ENCODE measurements at regions of chr5 and their contacts with region 1.

Region 1: GRCh38 chr5:149128023-149128875 is 13.0 kb upstream of the ABLIM3 start:
- DNase-seq: peak; percentile 87
- ATAC-seq: peak; percentile 48
- H3K4me3 ChIP-seq: no peak overlapping the region
- H3K27ac ChIP-seq: peak overlapping the region; percentile 19
- H3K4me1 ChIP-seq: peaks cover 71% of the 10 kb centered on the region
- H3K27me3 ChIP-seq: no peaks in the 10 kb centered on the region
- CTCF ChIP-seq: peak; percentile 100

Region 2: GRCh38 chr5:148760945-148761638 is 367.2 kb before region 1 on chr5:
- CTCF ChIA-PET with region 1: no interaction called
- POLR2A ChIA-PET with region 1: interaction called, 16 read pairs
- intact Hi-C with region 1: no loop called
- DNase-seq: no peak
- ATAC-seq: no peak
- H3K4me3 ChIP-seq: no peak overlapping the region
- H3K27ac ChIP-seq: no peak overlapping the region
- H3K4me1 ChIP-seq: peaks cover under 1% of the 10 kb centered on the region; the same call in 1 of the 2 replicates
- H3K27me3 ChIP-seq: no peaks in the 10 kb centered on the region
- CTCF ChIP-seq: no peak

Region 3: GRCh38 chr5:148912714-148913398 is 215.4 kb before region 1 on chr5:
- CTCF ChIA-PET with region 1: no interaction called
- POLR2A ChIA-PET with region 1: no interaction called
- intact Hi-C with region 1: loop called (anchors 5 kb)
- DNase-seq: peak; percentile 100
- ATAC-seq: peak; percentile 62
- H3K4me3 ChIP-seq: peak overlapping the region; percentile 19; the same call in 1 of the 2 replicates
- H3K27ac ChIP-seq: peak overlapping the region; percentile 88
- H3K4me1 ChIP-seq: peaks cover 80% of the 10 kb centered on the region
- H3K27me3 ChIP-seq: no peaks in the 10 kb centered on the region
- CTCF ChIP-seq: peak; percentile 97

Region 4: DNA sequence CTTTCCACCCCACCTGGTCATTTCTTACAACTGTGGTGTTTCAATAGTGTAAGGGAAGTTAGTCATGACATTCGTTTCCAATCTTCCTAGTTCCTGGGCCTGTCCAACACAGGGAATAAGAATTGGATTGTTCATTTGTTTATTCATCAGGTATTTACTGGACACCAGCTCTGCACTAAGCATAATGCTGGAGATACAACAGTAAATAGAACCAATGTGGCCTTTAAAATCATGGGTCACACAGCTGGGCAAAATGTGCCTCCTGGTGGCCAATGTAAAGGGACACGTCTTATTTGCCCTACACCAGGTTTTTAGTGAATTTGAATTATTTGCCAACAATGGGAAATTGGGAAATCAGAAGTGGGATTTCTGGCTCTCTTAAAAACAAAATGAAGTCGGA is 23.5 kb after region 1 on chr5:
- CTCF ChIA-PET with region 1: interaction called, 7 read pairs
- POLR2A ChIA-PET with region 1: interaction called, 3 read pairs
- intact Hi-C with region 1: loop called (anchors 1 kb)
- DNase-seq: peak; percentile 77
- ATAC-seq: peak; percentile 68
- H3K4me3 ChIP-seq: no peak overlapping the region
- H3K27ac ChIP-seq: peak overlapping the region; percentile 23
- H3K4me1 ChIP-seq: peaks cover 28% of the 10 kb centered on the region
- H3K27me3 ChIP-seq: no peaks in the 10 kb centered on the region
- CTCF ChIP-seq: peak; percentile 93

Region 5: DNA sequence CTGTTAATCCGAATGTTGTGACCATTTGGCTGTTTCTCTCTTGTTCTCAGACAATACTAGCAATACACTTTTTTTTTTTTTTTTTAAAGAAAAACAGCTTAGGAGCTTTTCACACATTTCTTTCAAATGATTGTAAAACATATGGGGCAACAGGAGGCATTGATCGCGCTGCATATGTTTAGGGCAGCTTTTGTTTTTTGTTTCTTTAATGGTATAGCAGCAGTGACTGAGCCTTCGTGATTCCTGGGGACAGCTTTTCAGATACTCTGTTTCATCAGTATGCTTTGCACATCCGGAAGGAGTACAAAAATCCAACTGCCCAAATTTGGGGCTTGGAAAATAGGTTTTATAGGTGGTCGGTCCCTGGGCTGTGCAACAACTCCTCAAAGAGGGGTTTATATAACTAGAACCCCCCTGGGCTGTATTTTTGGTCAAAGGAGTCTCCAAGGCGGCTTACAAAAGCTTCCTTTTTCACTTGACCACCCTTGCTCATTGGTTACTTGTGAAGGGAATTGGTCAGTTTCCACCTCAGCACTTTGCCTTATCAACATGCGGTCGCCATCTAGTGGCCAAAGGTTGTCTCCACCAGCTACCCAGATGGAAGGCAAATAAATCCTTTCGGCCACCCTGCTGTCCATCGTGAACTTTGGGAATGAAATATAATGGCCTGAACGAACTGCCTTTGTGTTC is 724.5 kb after region 1 on chr5:
- CTCF ChIA-PET with region 1: interaction called, 10 read pairs
- POLR2A ChIA-PET with region 1: no interaction called
- intact Hi-C with region 1: no loop called
- DNase-seq: peak; percentile 87
- ATAC-seq: peak; percentile 93
- H3K4me3 ChIP-seq: no peak overlapping the region
- H3K27ac ChIP-seq: no peak overlapping the region
- H3K4me1 ChIP-seq: peaks cover 7% of the 10 kb centered on the region; the same call in 1 of the 2 replicates
- H3K27me3 ChIP-seq: no peaks in the 10 kb centered on the region
- CTCF ChIP-seq: peak; percentile 99

Measured in PC-3 (cell line).